GM18951 (cell line): ENCODE measurements at regions of chr18 and their contacts with region 1.

Region 1: DNA sequence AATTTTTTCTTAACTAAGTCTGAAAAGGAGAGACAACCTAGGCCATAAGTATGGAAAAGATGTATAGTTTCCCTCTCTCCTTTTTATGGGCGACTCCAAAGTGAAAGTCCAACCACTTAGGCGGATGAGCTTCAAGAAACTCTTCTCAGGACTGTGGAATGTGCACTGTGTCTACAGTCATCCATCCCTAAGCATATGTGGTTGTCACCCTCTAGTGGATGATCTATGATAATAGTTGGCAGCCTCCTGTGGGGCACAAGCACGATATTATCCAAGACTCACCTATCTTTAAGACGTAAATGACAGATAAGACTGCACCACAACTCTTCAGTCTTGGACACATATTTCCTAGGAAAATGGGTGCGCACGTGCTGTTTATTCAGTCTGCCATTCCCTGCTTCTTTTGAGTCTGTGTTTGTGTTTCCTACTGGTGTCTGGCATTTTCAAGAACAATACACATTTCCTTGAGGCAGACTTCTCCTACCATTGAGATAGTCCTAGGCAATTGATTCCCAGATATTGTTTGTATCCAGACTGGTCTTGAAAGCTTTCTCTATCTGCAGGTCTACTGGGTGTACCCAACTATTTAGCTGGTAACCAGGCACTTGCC is 145.5 kb upstream of the CTAGE1 start:
- POLR2A ChIP-seq: no peak

Region 2: DNA sequence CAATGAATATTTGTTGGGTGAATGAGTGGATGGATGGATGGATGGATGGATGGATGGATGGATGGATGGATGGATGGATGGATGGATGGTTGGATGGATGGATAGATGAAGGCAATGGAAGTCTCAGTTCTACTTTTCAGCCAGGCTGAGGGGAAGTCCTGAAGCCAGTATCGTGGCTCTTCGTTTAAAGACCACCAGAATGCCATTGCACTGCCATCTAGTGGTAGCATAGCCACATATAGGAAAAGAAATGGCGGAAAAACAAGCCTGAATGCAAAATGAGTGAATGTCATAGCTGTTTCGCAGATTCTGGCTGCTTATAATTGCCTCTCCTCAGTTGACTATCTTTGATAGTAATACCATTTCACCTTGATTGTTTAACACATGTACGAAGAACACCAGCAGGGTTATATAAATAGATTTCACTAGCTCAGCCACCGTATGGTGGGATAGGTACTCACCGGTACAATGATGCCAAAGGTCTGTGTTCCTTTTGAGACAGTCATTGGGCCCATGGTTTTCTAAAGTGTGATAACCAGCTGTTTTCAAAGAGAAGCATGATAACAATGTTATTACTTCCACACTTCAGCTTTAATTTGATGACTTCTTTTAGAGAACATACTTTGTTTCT is 1383.5 kb before region 1 on chr18:
- in situ Hi-C with region 1: loop called (anchors 25 kb)
- POLR2A ChIP-seq: no peak

Region 3: GRCh38 chr18:22503803-22504202 is 59.4 kb before region 1 on chr18:
- in situ Hi-C with region 1: no loop called
- POLR2A ChIP-seq: no peak

Region 4: DNA sequence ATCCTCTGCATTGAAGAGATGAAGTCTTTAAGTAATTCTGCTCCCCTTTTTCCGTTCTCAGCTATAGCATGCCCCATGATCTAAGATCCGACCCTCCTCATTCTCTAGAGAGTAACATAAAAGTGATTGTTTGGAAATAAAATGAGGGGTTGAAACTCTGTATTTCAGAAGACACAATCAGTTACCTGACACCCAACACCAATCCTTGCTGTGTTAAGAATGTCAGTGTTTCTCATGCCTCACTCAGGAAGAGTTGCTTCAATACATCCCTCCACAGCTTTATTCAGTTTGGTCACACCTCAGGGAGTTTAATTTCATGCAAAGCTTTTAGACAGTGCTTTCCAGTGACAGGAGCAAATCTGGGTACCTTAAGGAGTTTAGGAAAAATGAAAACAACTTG is 320.0 kb after region 1 on chr18:
- in situ Hi-C with region 1: no loop called
- POLR2A ChIP-seq: no peak

Region 5: DNA sequence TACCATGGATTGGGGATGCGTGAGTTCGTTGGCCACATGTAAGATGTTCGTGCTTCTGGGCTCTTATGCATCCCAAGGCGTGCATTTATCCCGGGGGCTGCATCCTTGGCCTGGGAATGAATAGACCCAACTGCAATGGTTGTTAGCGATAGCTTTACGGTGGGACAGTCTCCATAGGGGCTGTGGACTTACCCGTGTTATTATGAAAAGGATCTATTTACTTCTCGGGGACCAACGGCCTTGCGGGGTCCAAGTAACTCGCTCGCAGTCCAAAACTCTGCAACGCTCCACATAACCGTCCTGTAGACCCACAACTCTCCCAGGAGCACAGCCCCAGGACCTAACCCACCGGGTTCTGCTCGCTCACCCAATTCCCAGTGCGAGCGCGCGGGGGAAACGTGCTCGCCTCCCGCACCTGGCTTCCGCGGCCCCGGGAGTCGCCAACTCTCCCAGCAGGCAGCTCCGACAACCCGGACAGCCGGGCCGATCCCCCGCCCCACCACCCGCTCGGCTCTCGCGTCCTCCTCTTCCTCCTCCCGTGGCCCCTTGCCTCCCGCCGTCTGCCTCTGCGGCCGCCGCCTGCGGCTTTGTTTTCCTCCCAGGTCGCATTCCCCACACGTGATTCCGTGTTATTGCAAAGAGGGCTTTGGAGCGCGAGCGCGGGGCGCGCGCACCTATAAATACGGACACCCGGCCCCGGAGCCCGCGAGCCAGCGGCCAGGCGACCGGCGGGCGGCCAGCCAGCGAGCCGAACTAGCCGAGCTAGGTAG is 571.8 kb after region 1 on chr18 and contains the start of gene CABLES1:
- in situ Hi-C with region 1: no loop called
- POLR2A ChIP-seq: peak; percentile 72